PC-9 (cell line): ENCODE measurements at regions of chr13 and their contacts with region 1.

Region 1: GRCh38 chr13:114256547-114256946 is 21.9 kb downstream of the CDC16 start:
- DNase-seq: no peak
- H3K4me3 ChIP-seq: no peak overlapping the region
- H3K27ac ChIP-seq: no peak overlapping the region
- H3K4me1 ChIP-seq: no peaks in the 10 kb centered on the region
- H3K27me3 ChIP-seq: no peaks in the 10 kb centered on the region
- CTCF ChIP-seq: no peak

Region 2: GRCh38 chr13:113364311-113364889 is 892.1 kb before region 1 on chr13:
- CTCF ChIA-PET with region 1: no interaction called
- POLR2A ChIA-PET with region 1: no interaction called
- intact Hi-C with region 1: no loop called
- DNase-seq: peak in 1 of 2 experiments; percentile 18
- H3K4me3 ChIP-seq: peak overlapping the region; percentile 48; the same call in 1 of the 2 replicates
- H3K27ac ChIP-seq: no peak overlapping the region
- H3K4me1 ChIP-seq: no peaks in the 10 kb centered on the region; the same call in 1 of the 2 replicates
- H3K27me3 ChIP-seq: no peaks in the 10 kb centered on the region
- CTCF ChIP-seq: no peak

Region 3: DNA sequence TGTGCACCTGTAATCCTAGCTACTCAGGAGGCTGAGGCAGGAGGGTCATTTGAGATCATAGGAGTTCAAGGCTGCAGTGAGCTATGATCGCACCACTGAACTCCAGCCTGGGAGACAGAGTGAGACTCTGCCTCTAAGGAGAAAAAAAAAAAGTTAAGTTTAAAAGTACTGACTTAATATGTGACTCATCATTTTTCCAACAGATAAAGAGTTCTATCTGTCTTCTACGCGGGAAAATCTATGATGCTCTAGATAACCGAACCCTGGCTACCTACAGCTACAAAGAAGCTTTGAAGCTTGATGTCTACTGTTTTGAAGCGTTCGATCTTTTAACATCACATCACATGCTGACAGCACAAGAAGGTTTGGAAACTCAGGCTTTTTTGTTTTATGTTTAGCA is 14.6 kb before region 1 on chr13:
- CTCF ChIA-PET with region 1: no interaction called
- POLR2A ChIA-PET with region 1: no interaction called
- intact Hi-C with region 1: loop called (anchors 2 kb)
- DNase-seq: no peak
- H3K4me3 ChIP-seq: no peak overlapping the region
- H3K27ac ChIP-seq: no peak overlapping the region
- H3K4me1 ChIP-seq: no peaks in the 10 kb centered on the region
- H3K27me3 ChIP-seq: no peaks in the 10 kb centered on the region
- CTCF ChIP-seq: no peak